Activated B cell treated with CpG ODN at 0.5 μM for 24 hours (primary cell): ENCODE measurements at regions of chr2 and their contacts with region 1.

Region 1: DNA sequence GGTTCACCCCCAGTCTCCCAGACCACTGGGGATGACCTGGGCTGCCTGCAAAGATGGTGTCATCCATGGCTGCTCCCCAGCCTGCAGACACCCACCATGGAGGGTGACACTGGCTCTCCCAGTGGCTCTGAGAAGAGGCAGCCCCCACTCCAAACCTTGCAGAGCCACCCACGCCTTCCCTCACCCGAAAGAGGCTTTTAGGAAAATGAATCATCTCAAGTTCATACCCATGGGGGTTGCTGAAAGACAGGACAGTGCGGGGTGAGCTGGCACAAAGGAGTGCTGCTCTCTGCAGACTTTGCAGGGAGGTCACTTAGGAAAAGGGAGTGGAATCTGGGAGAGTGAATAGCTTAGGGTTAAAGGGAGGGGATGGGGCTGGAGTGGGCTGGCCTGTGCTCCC is 36.4 kb downstream of the MPHOSPH10 start:
- DNase-seq: no peak
- ATAC-seq: no peak
- H3K4me3 Mint-ChIP-seq: no peak overlapping the region
- H3K27ac Mint-ChIP-seq: no peak overlapping the region
- H3K4me1 Mint-ChIP-seq: no peaks in the 10 kb centered on the region
- H3K27me3 Mint-ChIP-seq: peaks cover 9% of the 10 kb centered on the region
- CTCF ChIP-seq: no peak

Region 2: DNA sequence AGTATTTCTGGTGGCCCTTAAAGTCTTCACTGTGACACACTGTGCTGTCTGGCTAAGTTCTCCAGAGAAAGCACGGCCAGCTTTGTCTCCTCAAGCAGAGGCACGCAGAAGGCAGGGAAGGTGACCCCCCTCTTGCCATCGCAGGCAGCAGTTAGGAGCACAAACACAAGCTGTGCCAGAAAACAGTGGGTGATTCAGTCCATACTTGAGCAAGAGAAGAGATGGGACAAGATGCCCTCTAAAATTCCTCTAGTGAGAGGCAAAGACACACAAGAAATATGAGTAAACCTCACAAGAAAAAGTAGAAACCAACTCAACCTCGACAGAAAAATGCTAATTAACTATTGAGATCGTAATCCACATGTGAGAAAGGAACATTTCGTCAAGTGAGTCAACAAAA is 46.6 kb before region 1 on chr2:
- CTCF ChIA-PET with region 1: no interaction called
- POLR2A ChIA-PET with region 1: interaction called, 10 read pairs
- intact Hi-C with region 1: no loop called
- DNase-seq: no peak
- ATAC-seq: no peak
- H3K4me3 Mint-ChIP-seq: no peak overlapping the region
- H3K27ac Mint-ChIP-seq: no peak overlapping the region
- H3K4me1 Mint-ChIP-seq: no peaks in the 10 kb centered on the region
- H3K27me3 Mint-ChIP-seq: no peaks in the 10 kb centered on the region
- CTCF ChIP-seq: no peak

Region 3: DNA sequence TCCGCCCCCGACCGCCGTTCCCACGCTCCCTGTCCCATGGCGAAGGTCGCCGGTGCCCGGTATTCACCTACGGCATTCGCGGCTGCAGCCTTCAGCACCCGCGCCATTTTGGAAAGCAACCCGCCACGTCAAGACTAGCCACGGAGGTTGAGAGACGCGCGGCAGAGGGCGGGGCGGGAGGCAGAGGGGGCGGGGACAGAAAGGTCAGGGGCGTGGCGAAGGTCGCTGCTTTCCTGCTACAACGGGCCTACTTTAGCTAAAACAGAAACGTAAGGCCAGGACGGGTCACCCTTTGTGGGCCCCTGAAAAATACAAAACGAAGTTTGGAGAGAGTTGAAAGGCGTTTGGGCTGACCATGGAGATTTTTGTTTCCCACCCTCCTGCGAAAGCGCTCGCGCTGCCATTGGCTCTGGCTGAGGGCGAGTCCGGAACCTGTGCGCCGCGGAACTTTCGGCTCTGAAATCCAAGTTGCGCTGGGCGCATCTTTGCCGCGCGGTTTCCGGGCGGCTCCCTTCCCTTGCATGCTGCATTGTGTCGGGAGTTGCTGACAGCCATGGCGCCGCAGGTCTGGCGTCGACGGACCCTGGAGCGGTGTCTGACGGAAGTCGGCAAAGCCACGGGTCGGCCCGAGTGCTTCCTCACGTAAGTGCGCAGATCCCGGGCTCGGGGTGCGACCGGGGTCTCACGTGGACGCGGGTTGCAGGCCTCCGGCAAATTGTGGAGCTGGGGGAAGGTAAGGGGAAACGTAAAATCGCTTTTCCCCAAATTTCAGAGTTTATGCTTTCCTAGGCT is 36.5 kb before region 1 on chr2 and contains the starts of genes MCEE and MPHOSPH10:
- CTCF ChIA-PET with region 1: no interaction called
- POLR2A ChIA-PET with region 1: no interaction called
- intact Hi-C with region 1: no loop called
- DNase-seq: peak; percentile 79
- ATAC-seq: peak; percentile 94
- H3K4me3 Mint-ChIP-seq: no peak within 1 kb of the TSS
- H3K27ac Mint-ChIP-seq: no peak within 1 kb of the TSS
- H3K4me1 Mint-ChIP-seq: peaks cover 17% of the 10 kb centered on the region
- H3K27me3 Mint-ChIP-seq: no peaks in the 10 kb centered on the region
- CTCF ChIP-seq: no peak
- total RNA-seq, gene MCEE: 11.1 and 12.2 TPM in 2 replicates
- total RNA-seq, gene MPHOSPH10: 47.6 and 47.8 TPM in 2 replicates